A549 (cell line): ENCODE measurements at regions of chr20 and their contacts with region 1.

Region 1: DNA sequence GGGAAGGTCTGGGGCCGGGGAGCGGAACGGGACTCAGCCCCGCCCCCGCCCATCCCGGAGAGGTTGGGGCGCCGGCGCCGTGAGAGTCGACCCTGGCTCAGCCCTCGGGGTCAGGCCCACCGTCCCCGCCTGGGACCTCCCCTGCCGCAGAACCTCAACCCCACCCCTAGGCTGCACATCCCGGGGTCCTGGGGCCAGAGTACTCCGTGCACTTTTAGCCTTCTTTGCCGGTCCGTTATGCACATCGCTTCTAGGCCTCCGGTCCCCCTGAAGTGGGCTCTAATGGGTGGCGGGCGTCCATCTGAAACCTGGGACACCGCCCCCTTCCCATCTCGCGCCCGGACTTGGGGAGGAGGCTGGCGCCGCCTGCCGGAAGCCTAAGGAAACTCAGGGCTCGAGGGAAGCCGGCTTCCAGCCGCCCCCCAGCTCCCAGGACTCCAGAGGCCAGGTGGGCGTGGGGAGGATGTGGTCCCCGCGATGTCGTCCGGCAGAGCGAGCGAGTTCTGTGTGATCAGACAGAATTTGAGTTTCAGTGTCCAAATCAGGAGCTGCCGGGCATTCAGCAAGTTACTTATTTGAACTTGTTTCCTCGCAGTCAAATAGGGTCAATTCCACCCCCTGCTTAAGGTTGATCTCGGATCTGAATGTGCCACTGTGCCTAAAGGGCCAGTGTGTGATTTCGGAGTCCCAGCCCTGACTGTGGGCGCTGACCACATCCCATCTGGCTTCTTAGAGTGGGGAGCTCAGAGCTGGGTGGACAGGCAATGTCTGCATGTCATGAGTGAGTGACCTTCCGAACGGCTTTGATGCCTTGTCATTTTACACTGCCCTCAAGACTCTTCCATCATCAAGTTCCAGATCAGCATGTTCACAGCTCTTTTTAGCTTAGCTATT is 47.6 kb downstream of the CPXM1 start:
- DNase-seq: peak; percentile 75 to 81
- ATAC-seq: peak in 1 of 2 experiments; percentile 61; a peak in 3 of 6 replicates
- H3K4me3 ChIP-seq: peak overlapping the region; percentile 68
- H3K27ac ChIP-seq: peak overlapping the region; percentile 73 to 83; a peak in 5 of 6 replicates
- H3K4me1 ChIP-seq: peaks cover 40% of the 10 kb centered on the region
- CTCF ChIP-seq: peak; percentile 84
- EP300 ChIP-seq: no peak
- POLR2A ChIP-seq: no peak
- RAD21 ChIP-seq: peak; percentile 67 to 68

Region 2: DNA sequence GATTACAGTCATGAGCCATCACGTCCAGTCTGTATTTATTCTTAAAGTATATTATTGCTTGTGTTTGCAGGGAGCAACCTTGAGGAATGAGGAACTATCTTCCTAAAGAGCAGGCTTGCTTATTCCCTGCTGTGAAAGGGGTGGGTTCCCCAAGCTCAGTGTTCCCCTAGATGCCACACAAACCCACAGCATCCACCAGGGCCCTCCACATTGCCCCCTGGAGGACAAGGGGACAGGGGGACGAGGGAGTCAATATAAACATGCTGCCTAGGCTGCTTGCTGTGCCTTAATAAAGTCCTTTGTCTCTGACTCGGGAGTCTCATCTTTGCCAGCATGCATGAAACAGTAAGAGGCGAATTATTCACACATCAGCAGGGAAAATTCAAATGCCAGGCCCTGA is 80.8 kb before region 1 on chr20:
- CTCF ChIA-PET with region 1: interaction called, 15 read pairs
- POLR2A ChIA-PET with region 1: no interaction called
- DNase-seq: peak in 1 of 2 experiments; percentile 32
- ATAC-seq: peak; percentile 15 to 69; a peak in 3 of 6 replicates
- H3K4me3 ChIP-seq: no peak overlapping the region
- H3K27ac ChIP-seq: no peak overlapping the region
- H3K4me1 ChIP-seq: no peaks in the 10 kb centered on the region
- CTCF ChIP-seq: 0 out of 3 replicates have a peak, but pooled peaks have one; percentile 16
- EP300 ChIP-seq: no peak
- POLR2A ChIP-seq: no peak
- RAD21 ChIP-seq: no peak

Region 3: GRCh38 chr20:2729251-2729713 is 23.5 kb before region 1 on chr20:
- CTCF ChIA-PET with region 1: interaction called, 21 read pairs
- POLR2A ChIA-PET with region 1: no interaction called
- DNase-seq: no peak
- ATAC-seq: no peak
- H3K4me3 ChIP-seq: no peak overlapping the region
- H3K27ac ChIP-seq: no peak overlapping the region
- H3K4me1 ChIP-seq: no peaks in the 10 kb centered on the region
- CTCF ChIP-seq: no peak
- EP300 ChIP-seq: no peak
- POLR2A ChIP-seq: no peak
- RAD21 ChIP-seq: no peak

Region 4: GRCh38 chr20:2767768-2768631 is 15.2 kb after region 1 on chr20:
- CTCF ChIA-PET with region 1: interaction called, 103 read pairs
- POLR2A ChIA-PET with region 1: no interaction called
- DNase-seq: no peak
- ATAC-seq: peak; percentile 36 to 52; a peak in 3 of 6 replicates
- H3K4me3 ChIP-seq: no peak overlapping the region
- H3K27ac ChIP-seq: no peak overlapping the region
- H3K4me1 ChIP-seq: no peaks in the 10 kb centered on the region
- CTCF ChIP-seq: no peak
- EP300 ChIP-seq: no peak
- POLR2A ChIP-seq: no peak
- RAD21 ChIP-seq: no peak

Region 5: GRCh38 chr20:2840138-2840966 is 87.5 kb after region 1 on chr20 and contains the starts of genes PCED1A and VPS16:
- CTCF ChIA-PET with region 1: interaction called, 13 read pairs
- POLR2A ChIA-PET with region 1: interaction called, 3 read pairs
- DNase-seq: peak; percentile 90 to 99
- ATAC-seq: peak; percentile 98 to 100
- H3K4me3 ChIP-seq: peak within 1 kb of the TSS; percentile 92
- H3K27ac ChIP-seq: peak within 1 kb of the TSS; percentile 84 to 95
- H3K4me1 ChIP-seq: peaks cover 17% of the 10 kb centered on the region
- CTCF ChIP-seq: no peak
- EP300 ChIP-seq: no peak
- POLR2A ChIP-seq: peak; percentile 86
- RAD21 ChIP-seq: 0 out of 5 replicates have a peak, but pooled peaks of 1 of the 2 experiments have one; percentile 8
- polyA plus RNA-seq, gene PCED1A: 25.7 and 31.4 TPM in 2 replicates
- polyA plus RNA-seq, gene VPS16: 33.0 and 35.5 TPM in 2 replicates

Region 6: GRCh38 chr20:2900845-2901592 is 148.2 kb after region 1 on chr20:
- CTCF ChIA-PET with region 1: no interaction called
- POLR2A ChIA-PET with region 1: no interaction called
- DNase-seq: no peak
- ATAC-seq: no peak
- H3K4me3 ChIP-seq: no peak overlapping the region
- H3K27ac ChIP-seq: no peak overlapping the region
- H3K4me1 ChIP-seq: no peaks in the 10 kb centered on the region
- CTCF ChIP-seq: no peak
- EP300 ChIP-seq: no peak
- POLR2A ChIP-seq: no peak
- RAD21 ChIP-seq: no peak

Region 7: GRCh38 chr20:2991532-2991931 is 238.7 kb after region 1 on chr20:
- CTCF ChIA-PET with region 1: interaction called, 10 read pairs
- POLR2A ChIA-PET with region 1: no interaction called
- DNase-seq: no peak
- ATAC-seq: no peak
- H3K4me3 ChIP-seq: no peak overlapping the region
- H3K27ac ChIP-seq: no peak overlapping the region
- H3K4me1 ChIP-seq: no peaks in the 10 kb centered on the region
- CTCF ChIP-seq: no peak
- EP300 ChIP-seq: no peak
- POLR2A ChIP-seq: no peak
- RAD21 ChIP-seq: no peak